ENCODE measurements at regions of chr2 and their contacts with region 1.

Region 1: DNA sequence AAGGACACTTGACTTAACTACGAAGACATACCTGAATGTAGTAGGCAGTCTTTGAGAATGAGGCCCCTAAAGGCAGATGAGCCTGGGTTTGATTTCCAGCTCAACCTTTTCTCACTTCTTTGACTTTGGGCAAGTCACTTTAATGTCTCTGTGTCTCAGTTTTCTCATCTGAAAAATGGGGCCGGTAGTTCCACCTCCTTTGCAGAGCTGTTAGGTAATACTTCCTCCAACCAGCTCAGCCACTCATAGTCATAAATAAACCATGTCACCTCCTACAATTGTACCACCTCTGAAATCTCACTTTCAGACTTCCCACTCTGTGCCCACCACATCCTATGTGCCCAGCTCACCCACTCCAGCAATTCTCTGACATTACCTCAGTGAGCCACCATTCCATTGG is 10.4 kb downstream of the ARHGAP25 start:
- DNase-seq: no peak
- ATAC-seq: no peak

Region 2: DNA sequence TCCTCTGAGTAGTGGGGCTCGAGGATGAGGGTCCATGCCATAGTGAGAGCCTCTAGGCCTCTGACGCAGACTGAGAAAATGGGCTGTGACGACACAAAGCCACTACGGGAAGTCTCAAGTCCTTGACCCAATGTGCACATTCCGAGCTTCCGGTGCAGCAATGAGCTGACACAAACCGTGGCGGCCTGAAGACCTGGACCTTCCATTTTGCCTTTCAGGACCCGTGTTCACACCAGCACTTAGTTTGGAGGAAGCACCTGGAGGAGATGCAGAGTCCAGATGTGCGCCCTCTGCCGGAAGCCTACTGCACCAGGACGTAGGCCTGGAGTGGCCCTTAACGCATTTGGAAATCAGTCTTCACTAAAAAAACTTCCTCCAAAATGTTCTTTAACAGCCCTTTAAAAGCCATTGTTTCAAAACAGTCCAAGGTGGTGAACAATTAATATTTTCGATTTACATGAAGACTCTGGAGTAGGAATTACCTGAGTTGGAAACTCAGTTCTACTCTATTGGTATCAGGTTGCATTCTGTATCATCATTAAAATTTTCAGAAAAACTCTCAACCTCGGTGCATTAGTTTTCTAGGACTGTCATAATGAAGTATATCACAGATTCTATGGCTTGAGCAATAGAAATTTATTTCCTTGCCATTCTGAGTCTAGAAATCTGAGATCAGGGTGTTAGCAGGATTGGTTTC is 92.3 kb after region 1 on chr2:
- intact Hi-C with region 1: loop called in 1 of 2 experiments (anchors 5 kb)
- DNase-seq: peak; percentile 71
- ATAC-seq: peak in 1 of 2 donors; percentile 48

Region 3: DNA sequence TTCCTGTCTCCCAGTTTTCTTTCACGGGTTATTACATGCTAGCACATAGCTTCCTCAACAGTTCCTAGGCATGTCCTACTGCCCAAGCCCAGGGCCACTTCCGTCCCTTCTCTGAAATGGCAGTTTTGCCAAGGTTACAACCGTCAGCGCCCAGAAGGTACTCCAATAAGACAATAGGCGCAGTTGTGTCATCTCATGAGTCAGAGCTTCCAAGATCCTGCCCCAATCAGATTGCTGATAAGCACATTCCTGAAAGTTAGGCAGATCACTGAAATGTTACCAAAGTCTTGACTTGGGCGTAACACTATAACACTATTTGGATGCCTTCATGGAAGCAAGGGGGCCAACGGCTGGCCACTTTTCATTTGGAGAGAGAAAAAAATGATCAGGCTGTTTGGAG is 173.5 kb after region 1 on chr2:
- intact Hi-C with region 1: no loop called
- DNase-seq: no peak
- ATAC-seq: no peak

Measured in left cardiac atrium (tissue), 4 donors.